Endothelial cell of umbilical vein (primary cell): ENCODE measurements at regions of chr21 and their contacts with region 1.

Region 1: GRCh38 chr21:45478115-45478801 is 64.0 kb downstream of the SLC19A1 start:
- DNase-seq: peak; percentile 65
- H3K4me3 ChIP-seq: no peak overlapping the region
- H3K27ac ChIP-seq: peak overlapping the region; percentile 46
- H3K4me1 ChIP-seq: peaks cover 6% of the 10 kb centered on the region
- H3K27me3 ChIP-seq: no peaks in the 10 kb centered on the region
- CTCF ChIP-seq: peak; percentile 83 to 91
- POLR2A ChIP-seq: no peak

Region 2: GRCh38 chr21:45534663-45535331 is 56.5 kb after region 1 on chr21:
- CTCF ChIA-PET with region 1: no interaction called
- POLR2A ChIA-PET with region 1: no interaction called
- dilution Hi-C with region 1: no loop called
- intact Hi-C with region 1: loop called (anchors 10 kb)
- DNase-seq: peak; percentile 42
- H3K4me3 ChIP-seq: no peak overlapping the region
- H3K27ac ChIP-seq: peak overlapping the region; percentile 15
- H3K4me1 ChIP-seq: peaks cover 24% of the 10 kb centered on the region
- H3K27me3 ChIP-seq: no peaks in the 10 kb centered on the region
- CTCF ChIP-seq: no peak
- POLR2A ChIP-seq: no peak

Region 3: DNA sequence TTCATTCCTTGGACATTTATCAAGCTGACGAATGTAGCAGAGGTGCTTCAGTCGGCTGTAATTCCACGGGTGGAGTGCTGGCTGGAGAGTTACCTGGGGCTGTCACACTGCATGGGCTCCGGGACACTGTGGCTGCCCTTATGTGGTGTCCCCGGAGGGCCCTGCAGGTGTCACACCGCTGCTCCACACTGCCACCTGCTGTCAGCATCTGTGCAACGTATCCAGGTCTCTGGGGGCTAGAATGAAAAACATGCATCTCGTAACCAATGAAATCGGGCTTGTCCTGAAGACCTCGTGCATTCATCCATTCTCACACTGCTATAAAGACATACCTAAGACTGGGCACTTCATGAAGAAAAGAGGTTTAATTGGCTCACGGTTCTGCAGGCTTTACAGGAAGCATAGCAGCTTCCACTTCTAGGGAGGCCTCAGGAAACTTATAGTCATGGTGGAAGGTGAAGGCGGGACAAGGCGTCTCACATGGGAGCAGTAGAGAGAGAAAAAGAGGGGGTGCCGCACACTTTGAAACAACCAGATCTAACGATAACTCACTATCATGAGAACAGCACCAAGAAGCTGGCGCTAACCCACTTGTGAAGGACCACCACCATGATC is 118.6 kb after region 1 on chr21:
- CTCF ChIA-PET with region 1: interaction called, 3 read pairs
- POLR2A ChIA-PET with region 1: no interaction called
- dilution Hi-C with region 1: no loop called
- intact Hi-C with region 1: loop called (anchors 1 kb)
- DNase-seq: peak; percentile 60
- H3K4me3 ChIP-seq: no peak overlapping the region
- H3K27ac ChIP-seq: no peak overlapping the region
- H3K4me1 ChIP-seq: no peaks in the 10 kb centered on the region
- H3K27me3 ChIP-seq: no peaks in the 10 kb centered on the region
- CTCF ChIP-seq: peak; percentile 78 to 92
- POLR2A ChIP-seq: no peak

Region 4: DNA sequence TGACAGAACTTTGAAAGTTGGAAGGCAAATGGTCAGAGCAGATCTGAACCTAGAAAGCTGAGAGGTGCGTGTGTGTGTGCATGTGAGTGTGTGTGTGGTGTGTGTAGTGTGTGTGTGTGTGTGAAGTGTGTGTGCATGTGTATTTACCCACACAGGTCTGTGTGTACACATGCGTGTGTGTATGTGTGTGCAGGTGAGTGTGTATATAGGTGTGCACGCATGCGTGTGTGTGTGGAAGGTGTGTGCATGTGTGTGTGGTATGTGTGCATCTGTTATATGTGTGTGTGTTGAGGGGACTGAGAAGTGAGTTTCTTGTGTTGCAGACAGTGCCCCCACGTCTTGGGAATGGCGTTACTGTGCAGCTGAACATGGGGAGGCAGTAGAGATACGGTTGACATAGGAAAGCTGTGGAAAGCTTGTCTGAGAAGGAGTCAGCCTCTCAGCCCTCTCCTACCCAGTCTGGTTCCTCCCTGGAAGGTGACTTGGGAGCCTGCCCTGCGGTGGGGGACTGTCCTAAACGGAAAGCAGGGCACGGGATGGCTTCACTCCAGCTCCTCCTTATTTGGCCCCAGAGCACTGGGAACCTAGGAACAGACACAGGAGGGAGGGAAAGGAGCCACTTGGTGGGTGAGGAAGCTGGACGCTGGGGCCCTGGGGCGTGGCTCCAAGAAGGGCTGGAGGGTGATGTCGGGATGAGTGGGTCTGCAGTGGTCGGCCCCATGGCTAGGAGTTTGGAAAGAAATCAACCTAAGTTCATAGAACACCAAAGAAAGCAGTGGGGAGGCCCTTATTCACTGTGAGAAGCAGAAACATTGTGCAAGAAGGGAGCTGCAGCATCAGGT is 262.5 kb after region 1 on chr21:
- CTCF ChIA-PET with region 1: no interaction called
- POLR2A ChIA-PET with region 1: no interaction called
- dilution Hi-C with region 1: no loop called
- intact Hi-C with region 1: no loop called
- DNase-seq: no peak
- H3K4me3 ChIP-seq: no peak overlapping the region
- H3K27ac ChIP-seq: no peak overlapping the region
- H3K4me1 ChIP-seq: no peaks in the 10 kb centered on the region
- H3K27me3 ChIP-seq: peaks cover 0 to 6% of the 10 kb centered on the region in 2 experiments
- CTCF ChIP-seq: no peak
- POLR2A ChIP-seq: no peak

Region 5: DNA sequence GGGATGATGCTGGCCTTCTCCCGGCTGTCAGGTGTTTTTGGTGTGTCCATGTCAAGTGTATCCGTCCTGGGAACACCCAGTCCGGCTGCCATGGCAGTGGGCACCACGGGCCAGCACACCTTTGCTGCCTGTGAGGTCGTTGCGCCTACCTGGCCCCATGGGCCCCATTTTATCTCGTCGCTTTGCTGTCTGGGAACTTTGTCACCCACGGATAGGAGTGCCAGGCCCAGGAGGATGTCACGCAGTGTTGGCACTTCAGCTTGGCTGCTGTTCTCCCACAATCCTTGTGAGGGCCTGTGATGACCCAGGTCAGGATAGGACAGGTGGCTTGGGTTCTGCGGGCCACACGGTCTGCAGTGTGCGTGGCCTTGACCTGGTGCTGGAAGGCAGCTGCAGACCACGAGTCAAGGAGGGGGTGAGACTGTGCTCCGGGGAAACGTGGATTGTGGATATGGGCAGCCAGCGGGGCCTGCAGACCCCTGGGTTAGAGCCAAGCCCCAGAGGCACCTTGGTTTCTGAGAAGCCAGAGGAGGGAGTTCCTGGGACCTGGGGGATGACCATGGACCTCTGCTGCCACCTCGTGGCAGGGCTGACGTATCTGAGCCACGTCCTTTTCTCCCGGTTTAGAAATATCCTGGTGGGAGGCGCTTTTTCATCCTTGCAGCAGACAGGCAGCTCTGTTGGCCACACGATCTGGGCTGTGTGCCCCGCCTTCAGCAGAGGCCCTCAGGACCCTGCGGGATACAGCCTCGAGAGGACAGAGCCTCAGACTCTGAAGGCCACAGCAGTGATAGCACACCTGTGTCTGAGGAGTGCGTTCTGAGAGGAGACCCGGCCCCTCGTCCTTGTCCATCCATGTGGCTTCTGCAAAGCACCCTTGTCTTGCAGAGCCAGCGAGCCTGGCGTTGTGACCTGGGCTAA is 342.2 kb after region 1 on chr21:
- CTCF ChIA-PET with region 1: no interaction called
- POLR2A ChIA-PET with region 1: no interaction called
- dilution Hi-C with region 1: no loop called
- intact Hi-C with region 1: loop called (anchors 1 kb)
- DNase-seq: peak; percentile 60
- H3K4me3 ChIP-seq: no peak overlapping the region
- H3K27ac ChIP-seq: no peak overlapping the region
- H3K4me1 ChIP-seq: no peaks in the 10 kb centered on the region
- H3K27me3 ChIP-seq: peaks cover 3 to 4% of the 10 kb centered on the region in 2 experiments
- CTCF ChIP-seq: peak; percentile 77 to 87
- POLR2A ChIP-seq: no peak